ENCODE measurements at regions of chr4 and their contacts with region 1.

Region 1: DNA sequence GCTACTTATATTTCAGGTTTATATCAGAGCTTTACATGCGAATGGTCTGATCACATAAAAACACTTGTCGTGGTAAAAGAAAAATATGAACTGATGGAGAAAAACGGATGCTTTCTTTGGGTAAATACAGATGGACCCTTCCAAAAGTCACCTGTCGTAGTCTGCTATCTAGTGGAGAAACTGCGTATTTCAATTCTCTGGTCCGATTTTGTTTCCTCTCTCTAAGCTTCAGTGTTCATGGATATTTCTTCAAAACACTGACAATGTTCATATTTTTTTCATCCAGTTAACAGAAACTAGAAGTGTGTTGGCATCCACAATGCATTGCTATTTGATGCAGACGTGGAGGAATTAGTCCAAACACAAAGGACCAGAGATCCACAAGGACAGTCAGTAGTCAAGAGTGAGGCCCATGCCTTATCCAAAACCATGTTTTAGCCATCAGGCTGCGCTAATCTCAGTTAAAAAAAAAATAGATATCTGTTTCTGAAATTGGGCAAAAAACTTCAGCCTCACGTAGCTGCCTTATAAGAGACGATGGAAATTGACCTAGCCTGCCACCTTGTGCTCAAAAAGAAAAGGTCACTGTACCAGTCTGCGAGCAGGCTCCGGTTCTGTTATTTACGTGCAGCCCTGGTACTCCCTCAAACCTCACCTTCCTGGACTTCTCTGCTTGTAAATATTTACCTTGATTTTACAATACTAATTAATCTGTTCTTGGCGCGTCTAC is 16.0 kb downstream of the MEPE start:
- DNase-seq: peak; percentile 6
- H3K4me3 Mint-ChIP-seq: no peak overlapping the region
- H3K27ac Mint-ChIP-seq: no peak overlapping the region
- H3K4me1 Mint-ChIP-seq: peaks cover 13% of the 10 kb centered on the region
- H3K27me3 Mint-ChIP-seq: peaks cover 22% of the 10 kb centered on the region

Region 2: DNA sequence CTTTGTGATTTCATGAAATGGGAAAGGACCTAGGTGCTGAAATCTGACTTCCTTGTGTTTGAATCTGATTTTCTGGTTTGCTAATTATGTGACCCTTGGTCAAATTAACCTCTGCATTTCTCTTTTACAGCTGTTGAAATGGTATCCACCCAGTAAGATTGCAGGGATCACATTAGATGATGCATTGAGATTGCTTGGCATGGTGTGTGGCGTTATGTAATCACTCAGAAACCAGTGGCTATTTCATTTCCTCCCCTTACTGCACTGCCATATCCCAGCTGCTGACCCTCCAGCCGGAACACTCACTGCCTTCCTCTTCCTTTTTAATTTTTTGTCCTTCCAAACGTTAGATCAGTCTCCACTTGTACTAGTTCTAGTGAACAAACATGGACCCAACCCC is 707.4 kb before region 1 on chr4:
- intact Hi-C with region 1: no loop called
- DNase-seq: no peak
- H3K4me3 Mint-ChIP-seq: no peak overlapping the region
- H3K27ac Mint-ChIP-seq: no peak overlapping the region
- H3K4me1 Mint-ChIP-seq: no peaks in the 10 kb centered on the region
- H3K27me3 Mint-ChIP-seq: no peaks in the 10 kb centered on the region

Region 3: DNA sequence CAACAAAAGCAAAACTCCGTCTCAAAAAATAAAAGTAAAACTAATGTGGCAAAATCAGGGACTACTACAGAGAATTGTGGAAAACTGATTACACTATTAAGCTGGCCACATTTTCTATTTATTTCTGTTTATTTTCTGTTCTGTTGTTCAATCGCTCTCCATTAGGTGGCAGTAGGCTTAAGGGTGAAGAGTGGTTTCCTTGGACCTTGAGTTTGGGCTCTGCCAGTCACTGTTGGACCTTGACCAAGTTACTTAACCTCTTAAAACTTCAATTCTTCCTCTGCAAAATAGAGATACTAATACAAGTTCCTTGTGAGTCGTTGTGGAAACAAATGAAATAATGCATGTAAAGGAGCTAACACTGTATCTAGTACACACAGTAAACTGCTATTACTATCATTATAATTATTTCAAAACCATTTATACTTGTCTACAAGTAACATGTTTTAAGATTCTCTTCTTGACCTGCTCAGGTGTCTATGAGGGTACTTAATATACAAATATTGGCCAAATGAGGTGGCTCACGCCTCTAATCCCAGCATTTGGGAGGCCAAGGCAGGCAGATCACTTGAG is 473.0 kb before region 1 on chr4:
- intact Hi-C with region 1: loop called (anchors 10 kb)
- DNase-seq: no peak
- H3K4me3 Mint-ChIP-seq: no peak overlapping the region
- H3K27ac Mint-ChIP-seq: no peak overlapping the region
- H3K4me1 Mint-ChIP-seq: no peaks in the 10 kb centered on the region
- H3K27me3 Mint-ChIP-seq: no peaks in the 10 kb centered on the region

Region 4: DNA sequence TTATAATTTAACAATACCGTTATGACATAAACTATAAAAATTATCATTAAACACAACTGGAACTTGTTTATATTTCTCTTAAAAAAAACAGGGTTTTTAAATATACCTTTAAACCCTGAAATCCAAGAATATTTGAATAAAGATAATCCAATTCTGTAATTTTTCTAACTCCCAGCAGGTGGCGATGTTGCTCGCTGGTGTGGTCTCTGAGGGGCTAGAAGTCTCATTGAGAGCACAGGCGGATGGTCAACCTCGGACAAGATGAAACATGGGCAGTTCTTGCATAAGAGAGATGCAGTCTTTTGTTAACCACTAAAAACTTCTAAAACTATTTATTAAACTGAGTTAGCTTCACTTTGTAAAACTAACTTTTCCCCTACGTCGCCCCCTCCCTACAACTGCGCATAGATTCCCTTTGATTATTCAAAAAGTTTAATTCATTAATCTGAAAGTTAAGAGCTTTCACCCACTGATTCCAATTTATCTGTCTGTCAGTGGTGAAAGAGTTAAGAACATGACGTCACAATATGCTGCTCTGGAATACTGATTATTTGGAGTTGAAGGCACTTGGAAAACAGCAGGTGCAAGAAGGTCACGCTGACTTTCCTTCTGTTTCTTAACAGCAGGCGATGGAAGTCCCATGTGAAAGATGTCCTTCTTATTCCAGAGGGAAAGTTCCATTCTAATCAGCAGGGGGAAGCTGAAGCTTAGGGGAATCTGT is 169.2 kb before region 1 on chr4:
- intact Hi-C with region 1: loop called (anchors 1 kb)
- DNase-seq: peak; percentile 2
- H3K4me3 Mint-ChIP-seq: no peak overlapping the region
- H3K27ac Mint-ChIP-seq: no peak overlapping the region
- H3K4me1 Mint-ChIP-seq: no peaks in the 10 kb centered on the region
- H3K27me3 Mint-ChIP-seq: no peaks in the 10 kb centered on the region

Region 5: GRCh38 chr4:87985097-87985886 is 136.5 kb after region 1 on chr4:
- intact Hi-C with region 1: loop called (anchors 1 kb)
- DNase-seq: no peak
- H3K4me3 Mint-ChIP-seq: no peak overlapping the region
- H3K27ac Mint-ChIP-seq: no peak overlapping the region
- H3K4me1 Mint-ChIP-seq: no peaks in the 10 kb centered on the region
- H3K27me3 Mint-ChIP-seq: peaks cover 18% of the 10 kb centered on the region

Region 6: DNA sequence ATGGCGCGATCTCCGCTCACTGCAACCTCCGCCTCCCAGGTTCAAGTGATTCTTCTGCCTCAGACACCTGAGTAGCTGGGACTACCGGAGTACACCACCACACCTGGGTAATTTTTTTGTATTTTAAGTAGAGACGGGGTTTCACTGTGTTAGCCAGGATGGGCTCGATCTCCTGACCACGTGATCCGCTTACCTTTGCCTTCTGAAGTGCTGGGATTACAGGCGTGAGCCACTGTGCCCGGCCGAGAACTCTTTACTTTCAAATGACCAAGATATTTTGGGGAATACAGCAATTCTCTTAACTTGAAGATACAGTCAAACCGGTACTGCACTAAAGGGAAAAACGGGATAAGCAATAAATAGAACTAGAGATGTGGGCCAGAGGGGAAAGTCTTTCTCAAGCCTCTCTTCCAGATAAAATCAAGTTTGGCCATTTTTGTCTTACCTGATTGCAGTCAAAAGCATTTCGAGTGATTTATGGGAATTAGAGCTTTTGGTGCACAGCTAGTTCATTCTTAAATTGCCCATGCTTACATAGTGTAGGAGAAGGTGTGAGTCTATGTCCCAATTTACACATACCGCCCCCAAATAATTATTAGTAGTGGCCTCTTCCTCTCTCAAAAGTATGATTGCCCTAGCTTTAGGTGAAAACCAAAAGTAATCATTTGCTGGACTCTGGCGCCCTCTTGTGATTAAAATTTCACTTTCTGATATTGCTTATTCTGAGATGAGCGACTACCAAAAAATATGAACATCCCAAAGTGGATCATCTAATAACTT is 362.9 kb after region 1 on chr4:
- intact Hi-C with region 1: loop called (anchors 1 kb)
- DNase-seq: peak; percentile 34
- H3K4me3 Mint-ChIP-seq: no peak overlapping the region
- H3K27ac Mint-ChIP-seq: no peak overlapping the region
- H3K4me1 Mint-ChIP-seq: no peaks in the 10 kb centered on the region
- H3K27me3 Mint-ChIP-seq: peaks cover 9% of the 10 kb centered on the region

Measured in activated T-helper 1 cell treated with anti-CD3 and anti-CD28 coated beads, Interleukin-12 subunit alpha, Interleukin-12 subunit beta, Interleukin-2, Interleukin-4 antibody, amounts not matched to agents 30 ng/mL and 10 ng/mL and 1 ng/mL, durations not matched to agents 14 hours and 24 hours and 36 hours (primary cell).